ENCODE measurements at regions of chr15 and their contacts with region 1.

Region 1: DNA sequence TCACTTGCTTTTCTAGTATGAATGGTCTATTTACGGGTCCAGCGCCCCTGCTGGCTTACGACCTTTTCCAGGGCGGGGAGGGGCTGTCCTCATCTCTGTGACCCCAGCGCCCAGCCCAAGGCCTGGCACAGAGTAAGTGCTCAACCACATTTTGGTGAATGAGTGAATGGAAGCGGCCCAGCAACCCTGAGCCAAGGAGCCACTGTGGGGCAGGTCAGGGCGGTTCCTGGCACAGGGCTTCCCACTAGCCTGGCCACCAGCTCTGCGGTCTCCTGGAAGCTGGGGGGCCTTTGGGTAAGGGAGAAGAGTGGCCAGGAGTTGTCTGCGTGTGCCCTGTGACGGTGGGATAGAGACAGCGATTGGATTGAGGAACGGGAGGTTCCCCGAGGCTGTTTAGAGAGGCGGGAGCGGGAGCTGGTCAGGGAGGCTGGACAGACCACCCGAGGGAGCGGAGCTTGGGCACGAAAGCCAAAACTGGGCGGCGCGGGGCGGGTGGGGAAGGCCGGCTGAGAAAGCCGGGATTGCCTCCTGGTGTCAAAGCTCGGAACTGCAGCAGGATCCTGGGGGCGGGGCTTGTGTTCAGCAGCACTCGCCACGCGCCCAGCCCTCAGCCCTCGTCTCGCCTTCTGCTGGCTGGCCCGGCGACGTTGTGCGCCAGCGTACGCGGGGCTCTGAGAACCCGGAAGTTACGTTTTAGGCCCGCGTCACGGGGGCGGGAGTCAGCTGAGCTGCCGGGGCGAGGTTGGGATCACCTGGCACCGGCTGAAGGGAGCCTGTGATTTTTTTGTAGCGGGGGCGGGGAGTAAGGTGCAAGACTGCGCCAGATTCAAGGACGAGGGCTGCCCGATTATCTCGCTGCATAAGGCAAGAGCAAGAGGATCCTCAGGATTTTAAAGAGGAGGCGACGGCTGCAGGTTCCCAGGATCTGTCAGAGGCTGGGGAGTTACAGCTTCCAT is at the start of gene VPS18:
- DNase-seq: peak; percentile 97 to 98
- ATAC-seq: peak; percentile 88 to 95
- H3K4me3 ChIP-seq: peak within 1 kb of the TSS; percentile 85 to 94 (median 92)
- H3K27ac ChIP-seq: peak within 1 kb of the TSS; percentile 91 to 98 (median 98)
- H3K4me1 ChIP-seq: peaks cover 13 to 17% of the 10 kb centered on the region in 2 donors
- H3K27me3 ChIP-seq: no peaks in the 10 kb centered on the region
- CTCF ChIP-seq: peak; percentile 97 to 99 (median 99)
- POLR2A ChIP-seq: peak; percentile 90 to 92
- total RNA-seq, gene VPS18: 18.5 to 26.1 (median 19.3) TPM

Region 2: DNA sequence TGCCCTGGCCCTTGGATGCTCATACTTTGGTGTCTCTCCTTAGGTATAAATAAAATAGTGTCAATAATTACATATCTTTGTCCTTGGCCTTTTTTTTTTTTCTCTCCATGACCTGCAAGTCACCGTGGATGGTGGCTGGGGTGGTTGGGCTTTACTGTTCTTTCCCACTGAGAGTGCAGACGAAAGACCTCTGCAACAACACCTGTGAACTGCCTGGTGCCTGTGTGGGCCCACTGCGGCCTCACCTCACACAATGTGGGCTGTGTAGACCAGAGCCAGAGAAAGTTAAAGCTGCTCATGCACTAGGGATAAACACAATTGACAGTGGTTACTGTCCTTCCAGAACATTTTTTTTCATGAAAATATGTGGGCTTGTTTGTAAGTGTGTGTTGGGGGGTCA is 368.2 kb before region 1 on chr15:
- in situ Hi-C with region 1: loop called in 1 of 4 experiments (anchors 25 kb)
- intact Hi-C with region 1: loop called (anchors 5 kb)
- DNase-seq: no peak
- ATAC-seq: no peak
- H3K4me3 ChIP-seq: no peak overlapping the region
- H3K27ac ChIP-seq: no peak overlapping the region
- H3K4me1 ChIP-seq: no peaks in the 10 kb centered on the region
- H3K27me3 ChIP-seq: no peaks in the 10 kb centered on the region
- CTCF ChIP-seq: no peak
- POLR2A ChIP-seq: no peak

Region 3: GRCh38 chr15:40684381-40684780 is 209.6 kb before region 1 on chr15:
- in situ Hi-C with region 1: loop called in 1 of 4 experiments (anchors 5 kb)
- intact Hi-C with region 1: loop called (anchors 1 kb)
- DNase-seq: no peak
- ATAC-seq: no peak
- H3K4me3 ChIP-seq: no peak overlapping the region
- H3K27ac ChIP-seq: no peak overlapping the region
- H3K4me1 ChIP-seq: peaks cover under 1 to 10% of the 10 kb centered on the region in 2 donors
- H3K27me3 ChIP-seq: no peaks in the 10 kb centered on the region
- CTCF ChIP-seq: no peak
- POLR2A ChIP-seq: no peak

Region 4: DNA sequence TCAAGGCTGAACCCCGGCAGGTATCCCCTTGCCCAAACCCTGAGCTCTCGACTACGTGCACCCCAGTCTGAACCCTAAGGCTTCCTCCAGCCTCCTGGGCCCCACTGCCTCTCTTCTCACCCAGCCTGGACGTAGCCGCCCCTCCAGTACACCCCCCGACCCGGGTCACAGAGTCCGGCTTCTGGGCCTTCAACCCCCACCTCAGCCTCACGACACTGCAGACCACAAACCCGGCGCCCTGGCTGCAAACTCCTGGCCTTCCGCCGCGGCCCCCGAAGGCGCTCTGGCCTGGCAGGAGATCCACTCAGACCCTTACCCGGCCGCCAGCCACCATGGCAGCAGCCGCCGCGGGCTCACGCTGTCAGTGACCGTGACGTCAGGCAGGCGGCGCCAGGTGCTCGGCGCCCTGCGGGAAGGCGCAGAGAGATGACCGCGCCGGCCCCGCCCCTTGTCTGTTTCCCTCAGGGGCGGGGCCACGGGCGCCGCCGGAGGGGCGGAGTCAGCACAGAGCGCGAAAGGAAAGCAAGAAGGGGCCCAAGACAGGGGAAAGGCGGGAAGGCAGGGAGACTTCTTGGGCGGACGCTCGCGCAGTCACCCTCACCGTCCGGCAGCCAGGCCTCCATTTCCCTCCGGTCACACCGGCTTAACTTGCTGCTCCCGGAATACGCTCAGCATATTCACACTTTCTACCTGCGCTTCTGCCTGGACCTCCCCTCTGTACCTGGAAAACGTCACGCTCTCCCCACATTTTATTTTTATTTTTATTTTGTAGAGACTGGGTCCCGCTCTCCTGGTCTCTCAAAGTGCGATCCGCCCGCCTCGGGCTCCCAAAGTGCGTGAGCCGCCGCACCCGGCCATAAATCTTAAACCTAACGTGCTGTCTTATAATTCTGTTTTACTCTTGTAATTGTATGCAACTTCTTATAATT is 138.9 kb before region 1 on chr15 and contains the start of gene RMDN3:
- in situ Hi-C with region 1: no loop called
- intact Hi-C with region 1: loop called (anchors 2 kb)
- DNase-seq: peak; percentile 78 to 88
- ATAC-seq: peak; percentile 90 to 93
- H3K4me3 ChIP-seq: peak within 1 kb of the TSS; percentile 90 to 100 (median 96)
- H3K27ac ChIP-seq: peak within 1 kb of the TSS; percentile 92 to 97 (median 95)
- H3K4me1 ChIP-seq: peaks cover 13 to 15% of the 10 kb centered on the region in 2 donors
- H3K27me3 ChIP-seq: no peaks in the 10 kb centered on the region
- CTCF ChIP-seq: no peak
- POLR2A ChIP-seq: peak; percentile 78 to 80
- total RNA-seq, gene RMDN3: 12.7 to 55.3 (median 19.6) TPM

Region 5: GRCh38 chr15:40857601-40858341 is 36.2 kb before region 1 on chr15:
- in situ Hi-C with region 1: loop called in 1 of 4 experiments (anchors 5 kb)
- intact Hi-C with region 1: loop called (anchors 1 kb)
- DNase-seq: peak in 1 of 2 donors; percentile 54
- ATAC-seq: peak; percentile 82 to 90
- H3K4me3 ChIP-seq: no peak overlapping the region
- H3K27ac ChIP-seq: no peak overlapping the region
- H3K4me1 ChIP-seq: no peaks in the 10 kb centered on the region
- H3K27me3 ChIP-seq: no peaks in the 10 kb centered on the region
- CTCF ChIP-seq: peak; percentile 76 to 93 (median 91)
- POLR2A ChIP-seq: no peak

Region 6: DNA sequence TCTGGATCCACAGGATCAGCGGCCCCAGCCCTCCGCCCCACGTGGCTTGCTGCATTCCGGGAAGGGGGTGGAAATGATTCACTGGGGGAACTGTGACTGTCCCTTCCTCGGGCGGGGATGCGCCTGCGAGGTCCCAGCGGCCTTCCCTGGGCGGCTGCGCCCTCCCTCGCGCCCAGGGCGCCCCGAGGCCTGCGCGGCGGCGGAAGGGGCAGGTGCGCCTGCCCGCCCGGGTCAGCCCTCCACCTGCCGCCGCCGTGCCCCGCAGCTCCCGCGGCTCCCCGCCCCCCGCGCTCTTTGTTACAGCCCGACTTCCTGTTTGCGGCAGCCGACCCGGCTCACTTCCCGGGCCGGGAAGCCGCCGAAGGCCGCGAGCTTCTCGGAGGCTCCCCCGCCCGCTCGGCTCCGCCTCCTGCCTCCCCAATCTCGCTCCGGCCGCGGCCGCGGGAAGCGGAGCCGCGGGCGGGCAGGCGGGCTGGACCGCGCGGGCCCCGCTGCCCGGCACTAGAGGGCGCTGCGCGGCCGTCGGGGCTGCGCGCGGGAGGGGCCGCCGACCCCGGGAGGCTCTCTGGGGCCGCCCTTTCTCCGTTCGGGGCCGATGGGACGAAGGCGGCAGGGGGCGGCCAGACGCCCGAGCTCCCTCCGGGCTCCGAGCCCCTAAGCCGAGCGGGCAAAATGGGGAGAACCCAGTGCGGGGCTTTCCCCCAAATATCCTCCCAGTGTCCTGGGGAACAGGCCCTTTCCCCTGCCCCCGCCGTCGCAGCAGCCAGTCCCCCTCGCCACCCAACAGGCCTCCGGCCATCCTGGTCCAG is 47.7 kb after region 1 on chr15:
- in situ Hi-C with region 1: no loop called
- intact Hi-C with region 1: no loop called
- DNase-seq: peak; percentile 41 to 56
- ATAC-seq: peak; percentile 62 to 68
- H3K4me3 ChIP-seq: peak overlapping the region; percentile 57 to 81 (median 68)
- H3K27ac ChIP-seq: peak overlapping the region; percentile 76 to 85 (median 82)
- H3K4me1 ChIP-seq: peaks cover 25 to 47% of the 10 kb centered on the region in 2 donors
- H3K27me3 ChIP-seq: peaks cover 0 to 4% (median 0%) of the 10 kb centered on the region in 3 donors
- CTCF ChIP-seq: peak in 4 of 5 experiments; percentile 94 to 97 (median 95)
- POLR2A ChIP-seq: peak; percentile 51 to 53

Region 7: GRCh38 chr15:40999190-40999589 is 105.2 kb after region 1 on chr15:
- in situ Hi-C with region 1: no loop called
- intact Hi-C with region 1: no loop called
- DNase-seq: no peak
- ATAC-seq: no peak
- H3K4me3 ChIP-seq: no peak overlapping the region
- H3K27ac ChIP-seq: no peak overlapping the region
- H3K4me1 ChIP-seq: peaks cover 10 to 15% of the 10 kb centered on the region in 2 donors
- H3K27me3 ChIP-seq: no peaks in the 10 kb centered on the region
- CTCF ChIP-seq: no peak
- POLR2A ChIP-seq: no peak